Endothelial cell of umbilical vein (primary cell): ENCODE measurements at regions of chr7 and their contacts with region 1.

Region 1: GRCh38 chr7:106542550-106543220 is 118.3 kb downstream of the CCDC71L start:
- DNase-seq: peak; percentile 96
- H3K4me3 ChIP-seq: no peak overlapping the region
- H3K27ac ChIP-seq: peak overlapping the region; percentile 59
- H3K4me1 ChIP-seq: peaks cover 44% of the 10 kb centered on the region
- H3K27me3 ChIP-seq: no peaks in the 10 kb centered on the region
- CTCF ChIP-seq: peak; percentile 62 to 68
- POLR2A ChIP-seq: no peak

Region 2: DNA sequence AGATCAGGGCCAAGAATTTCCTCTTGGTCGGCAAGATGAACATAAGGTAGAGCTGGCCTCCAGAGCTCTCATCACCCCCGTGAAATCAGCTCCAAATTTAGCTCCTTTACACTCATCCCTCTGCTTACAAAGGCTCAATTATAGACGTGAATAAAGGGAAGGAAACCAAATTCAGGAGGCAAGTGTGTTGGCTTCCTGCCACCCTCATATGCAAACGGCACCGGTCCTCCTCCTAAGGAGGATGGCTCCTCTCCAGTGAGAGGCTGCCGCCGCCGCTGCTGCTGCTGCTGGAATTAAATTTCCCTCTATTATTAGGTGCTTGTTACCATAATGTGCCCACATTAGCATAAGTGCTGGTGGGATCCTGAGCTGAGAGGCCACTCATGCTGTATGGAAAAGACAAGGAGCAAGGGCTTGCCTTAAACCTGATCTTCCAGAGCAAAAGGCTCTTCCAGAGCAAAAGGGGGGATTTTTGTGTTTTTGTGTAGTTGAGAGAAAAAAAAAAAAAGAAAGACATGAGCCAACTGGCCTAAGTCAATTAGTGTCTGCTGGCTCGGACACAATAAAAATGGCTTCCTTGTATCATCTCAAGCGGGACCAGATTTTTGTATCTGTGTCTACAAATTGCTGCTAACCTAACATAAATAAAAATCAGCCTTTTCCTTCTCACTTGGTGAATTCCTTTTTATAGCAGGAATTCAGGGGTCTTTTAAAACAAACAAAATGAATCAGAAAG is 511.2 kb before region 1 on chr7:
- CTCF ChIA-PET with region 1: no interaction called
- POLR2A ChIA-PET with region 1: no interaction called
- dilution Hi-C with region 1: no loop called
- intact Hi-C with region 1: no loop called
- DNase-seq: peak; percentile 6
- H3K4me3 ChIP-seq: no peak overlapping the region
- H3K27ac ChIP-seq: no peak overlapping the region
- H3K4me1 ChIP-seq: no peaks in the 10 kb centered on the region
- H3K27me3 ChIP-seq: peaks cover 25 to 35% of the 10 kb centered on the region in 2 experiments
- CTCF ChIP-seq: no peak
- POLR2A ChIP-seq: no peak

Region 3: DNA sequence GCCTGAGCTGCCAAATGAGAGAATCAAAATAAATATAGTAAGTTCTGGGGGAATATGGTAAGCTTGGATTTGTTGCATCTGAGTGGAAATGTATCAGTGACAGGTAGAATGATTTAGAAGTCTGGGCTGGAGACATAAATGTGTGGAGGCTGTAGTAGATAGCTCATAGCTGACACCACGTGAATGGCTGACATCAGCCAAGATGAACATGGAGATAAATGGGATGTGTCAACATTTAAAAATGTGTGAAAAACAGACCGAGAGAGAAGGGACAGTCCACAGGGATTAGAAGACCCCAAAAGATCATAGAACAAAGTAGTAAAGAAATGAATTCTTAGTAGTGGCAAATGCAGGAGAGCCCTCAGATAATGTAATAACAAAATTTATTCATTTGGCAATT is 298.8 kb before region 1 on chr7:
- CTCF ChIA-PET with region 1: no interaction called
- POLR2A ChIA-PET with region 1: no interaction called
- dilution Hi-C with region 1: no loop called
- intact Hi-C with region 1: no loop called
- DNase-seq: no peak
- H3K4me3 ChIP-seq: no peak overlapping the region
- H3K27ac ChIP-seq: no peak overlapping the region
- H3K4me1 ChIP-seq: no peaks in the 10 kb centered on the region
- H3K27me3 ChIP-seq: no peaks in the 10 kb centered on the region
- CTCF ChIP-seq: no peak
- POLR2A ChIP-seq: no peak

Region 4: GRCh38 chr7:106552645-106553445 is 10.2 kb after region 1 on chr7:
- CTCF ChIA-PET with region 1: interaction called, 11 read pairs
- POLR2A ChIA-PET with region 1: no interaction called
- dilution Hi-C with region 1: no loop called
- intact Hi-C with region 1: no loop called
- DNase-seq: no peak
- H3K4me3 ChIP-seq: no peak overlapping the region
- H3K27ac ChIP-seq: no peak overlapping the region
- H3K4me1 ChIP-seq: no peaks in the 10 kb centered on the region
- H3K27me3 ChIP-seq: no peaks in the 10 kb centered on the region
- CTCF ChIP-seq: no peak
- POLR2A ChIP-seq: no peak

Region 5: DNA sequence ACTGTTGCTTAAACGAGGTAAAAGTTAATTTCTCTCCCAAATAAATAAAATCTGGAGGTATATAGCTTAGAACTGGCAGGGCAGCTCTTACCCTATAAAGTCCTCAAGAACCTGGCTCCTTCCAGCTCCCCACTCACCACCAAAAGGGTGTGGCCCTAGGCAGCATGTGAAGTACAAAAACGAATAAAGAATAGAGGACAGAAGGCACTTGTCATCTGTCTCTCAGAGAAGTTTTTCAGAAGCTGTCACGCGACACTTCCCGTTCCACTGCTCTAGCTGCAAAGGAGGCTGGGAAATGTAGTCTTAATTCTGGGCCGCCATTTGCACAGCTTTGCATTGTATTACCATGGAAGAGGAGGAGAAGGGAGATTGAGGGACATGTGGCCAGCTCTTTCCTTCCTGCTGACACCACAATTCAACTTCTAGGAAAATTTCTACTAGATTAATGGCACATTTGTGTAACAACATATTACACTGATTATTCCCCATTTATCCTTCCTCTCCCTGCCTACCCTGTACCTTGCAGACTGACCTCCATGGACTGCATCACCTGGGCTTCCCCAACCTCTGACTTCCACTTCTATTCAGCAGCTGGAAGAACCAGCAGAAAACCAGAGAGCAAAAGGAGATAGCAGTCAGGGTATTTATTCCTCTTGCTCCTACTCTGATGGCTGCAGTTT is 56.1 kb after region 1 on chr7:
- CTCF ChIA-PET with region 1: interaction called, 20 read pairs
- POLR2A ChIA-PET with region 1: no interaction called
- dilution Hi-C with region 1: no loop called
- intact Hi-C with region 1: no loop called
- DNase-seq: peak; percentile 87
- H3K4me3 ChIP-seq: peak overlapping the region in 2 of 3 experiments; percentile 29 to 43
- H3K27ac ChIP-seq: peak overlapping the region; percentile 41
- H3K4me1 ChIP-seq: peaks cover 3% of the 10 kb centered on the region
- H3K27me3 ChIP-seq: no peaks in the 10 kb centered on the region
- CTCF ChIP-seq: no peak
- POLR2A ChIP-seq: peak; percentile 32

Region 6: GRCh38 chr7:106629516-106629915 is 86.8 kb after region 1 on chr7:
- CTCF ChIA-PET with region 1: interaction called, 11 read pairs
- POLR2A ChIA-PET with region 1: no interaction called
- dilution Hi-C with region 1: no loop called
- intact Hi-C with region 1: no loop called
- DNase-seq: peak; percentile 39
- H3K4me3 ChIP-seq: no peak overlapping the region
- H3K27ac ChIP-seq: no peak overlapping the region
- H3K4me1 ChIP-seq: peaks cover 16% of the 10 kb centered on the region
- H3K27me3 ChIP-seq: peaks cover 10 to 17% of the 10 kb centered on the region in 2 experiments
- CTCF ChIP-seq: no peak
- POLR2A ChIP-seq: no peak

Region 7: GRCh38 chr7:106731187-106731586 is 188.5 kb after region 1 on chr7:
- CTCF ChIA-PET with region 1: interaction called, 139 read pairs
- POLR2A ChIA-PET with region 1: interaction called, 6 read pairs
- dilution Hi-C with region 1: no loop called
- intact Hi-C with region 1: loop called (anchors 1 kb)
- DNase-seq: peak; percentile 96
- H3K4me3 ChIP-seq: peak overlapping the region in 1 of 3 experiments; percentile 0
- H3K27ac ChIP-seq: peak overlapping the region; percentile 44
- H3K4me1 ChIP-seq: peaks cover 27% of the 10 kb centered on the region
- H3K27me3 ChIP-seq: no peaks in the 10 kb centered on the region
- CTCF ChIP-seq: no peak
- POLR2A ChIP-seq: no peak

Region 8: DNA sequence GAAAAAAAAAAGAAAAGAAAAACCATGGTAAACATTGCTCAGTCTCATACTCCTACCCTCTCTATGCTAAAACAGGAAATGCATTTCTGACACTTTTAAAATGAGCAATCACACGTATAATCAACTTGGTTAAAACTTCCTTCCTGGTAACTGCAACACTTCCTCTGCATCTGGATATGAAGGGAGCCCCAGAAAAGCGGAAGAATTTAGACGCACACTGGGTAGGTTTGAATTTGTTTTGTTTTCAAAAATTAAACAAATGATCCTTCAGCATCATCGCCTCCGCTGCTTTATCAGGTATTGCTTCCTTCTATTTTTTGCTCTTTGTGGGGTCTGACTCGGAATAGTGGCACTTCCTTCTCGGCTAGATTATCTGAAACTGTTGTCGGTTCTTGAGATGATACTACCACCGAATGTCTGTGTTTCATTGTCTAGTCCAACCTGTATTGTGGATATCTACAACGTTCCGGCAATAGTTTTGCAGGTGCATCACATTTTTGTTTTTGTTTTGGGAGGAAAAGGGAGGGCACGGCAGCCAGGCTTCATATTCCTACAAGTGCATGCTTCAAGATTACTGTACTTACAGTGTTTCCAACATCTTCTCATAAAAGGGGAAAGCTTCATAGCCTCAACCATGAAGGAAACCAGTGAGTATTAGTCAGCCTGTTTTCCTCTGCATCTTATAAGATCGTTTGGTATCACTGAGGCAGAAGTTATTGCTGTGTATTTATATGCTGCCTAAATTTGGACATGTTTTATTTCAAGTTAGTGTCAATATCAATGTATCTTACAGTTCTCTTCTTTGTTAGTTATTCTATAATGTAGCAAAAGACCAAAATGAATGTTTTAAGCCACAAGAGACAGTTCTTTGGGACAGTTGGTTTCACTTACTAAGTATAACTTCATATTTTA is 322.7 kb after region 1 on chr7 and contains the start of gene PIK3CG:
- CTCF ChIA-PET with region 1: interaction called, 6 read pairs
- POLR2A ChIA-PET with region 1: no interaction called
- dilution Hi-C with region 1: no loop called
- intact Hi-C with region 1: loop called (anchors 2 kb)
- DNase-seq: peak; percentile 64
- H3K4me3 ChIP-seq: peak within 1 kb of the TSS; percentile 29 to 87 (median 80)
- H3K27ac ChIP-seq: peak within 1 kb of the TSS; percentile 51
- H3K4me1 ChIP-seq: peaks cover 25% of the 10 kb centered on the region
- H3K27me3 ChIP-seq: no peaks in the 10 kb centered on the region
- CTCF ChIP-seq: no peak
- POLR2A ChIP-seq: peak; percentile 50
- total RNA-seq, gene PIK3CG: 4.9 and 6.2 TPM in 2 replicates